ENCODE measurements at regions of chrX and their contacts with region 1.

Region 1: DNA sequence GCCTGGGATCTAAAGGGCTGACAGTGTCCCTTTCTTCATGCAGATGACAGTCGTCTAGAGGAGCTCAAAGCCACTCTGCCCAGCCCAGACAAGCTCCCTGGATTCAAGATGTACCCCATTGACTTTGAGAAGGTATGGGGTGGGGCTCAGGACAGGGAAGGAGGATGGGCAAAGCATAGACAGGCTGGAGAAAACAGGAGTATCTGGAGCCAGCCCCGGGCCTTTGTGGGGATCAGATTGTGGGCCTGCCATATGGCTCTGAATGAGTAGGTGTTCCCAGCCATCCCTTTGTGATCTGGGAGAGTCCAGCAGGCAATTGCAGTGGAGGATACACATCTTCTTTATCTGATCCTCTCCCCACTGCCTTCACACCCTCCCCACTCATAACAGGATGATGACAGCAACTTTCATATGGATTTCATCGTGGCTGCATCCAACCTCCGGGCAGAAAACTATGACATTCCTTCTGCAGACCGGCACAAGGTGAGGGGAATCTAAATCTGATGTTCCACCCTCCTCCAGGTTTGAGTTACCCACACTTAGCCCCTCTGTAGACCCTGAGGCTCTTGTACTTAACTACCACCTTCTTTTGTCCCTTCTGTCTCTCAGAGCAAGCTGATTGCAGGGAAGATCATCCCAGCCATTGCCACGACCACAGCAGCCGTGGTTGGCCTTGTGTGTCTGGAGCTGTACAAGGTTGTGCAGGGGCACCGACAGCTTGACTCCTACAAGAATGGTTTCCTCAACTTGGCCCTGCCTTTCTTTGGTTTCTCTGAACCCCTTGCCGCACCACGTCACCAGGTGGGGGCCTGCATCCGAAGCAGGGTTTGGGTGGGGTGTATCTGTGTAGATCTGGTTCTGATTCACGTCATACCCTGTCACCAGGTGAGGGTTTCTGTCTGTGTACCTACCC is 5.8 kb upstream of the CDK16 start:
- DNase-seq: no peak
- H3K4me3 ChIP-seq: no peak overlapping the region
- H3K27ac ChIP-seq: no peak overlapping the region
- H3K4me1 ChIP-seq: peaks cover 0 to 4% (median 0%) of the 10 kb centered on the region in 4 experiments; a peak in 5 of 7 replicates
- H3K27me3 ChIP-seq: no peaks in the 10 kb centered on the region
- CTCF ChIP-seq: no peak
- EP300 ChIP-seq: no peak
- POLR2A ChIP-seq: no peak
- RAD21 ChIP-seq: no peak

Region 2: GRCh38 chrX:47200385-47201150 is 12.1 kb before region 1 on chrX:
- CTCF ChIA-PET with region 1: interaction called, 7 read pairs
- POLR2A ChIA-PET with region 1: interaction called, 63 read pairs
- DNase-seq: no peak
- H3K4me3 ChIP-seq: no peak overlapping the region
- H3K27ac ChIP-seq: no peak overlapping the region
- H3K4me1 ChIP-seq: peaks cover 0 to 9% (median 6%) of the 10 kb centered on the region in 4 experiments; a peak in 5 of 7 replicates
- H3K27me3 ChIP-seq: no peaks in the 10 kb centered on the region
- CTCF ChIP-seq: no peak
- EP300 ChIP-seq: no peak
- POLR2A ChIP-seq: no peak
- RAD21 ChIP-seq: no peak; a peak in 1 of 4 replicates